ENCODE measurements at regions of chr13 and their contacts with region 1.

Region 1: GRCh38 chr13:107117327-107118012 is 549.5 kb upstream of the ARGLU1 start:
- DNase-seq: no peak
- ATAC-seq: no peak
- H3K4me3 ChIP-seq: no peak overlapping the region
- H3K27ac ChIP-seq: no peak overlapping the region
- H3K4me1 ChIP-seq: no peaks in the 10 kb centered on the region
- H3K27me3 ChIP-seq: peaks cover 0 to 8% (median 0%) of the 10 kb centered on the region in 9 donors
- CTCF ChIP-seq: no peak
- POLR2A ChIP-seq: no peak

Region 2: GRCh38 chr13:106083620-106084350 is 1033.7 kb before region 1 on chr13:
- intact Hi-C with region 1: loop called in 4 of 10 experiments (anchors 5 to 10 kb)
- DNase-seq: peak in 2 of 5 donors; percentile 17 to 23
- ATAC-seq: peak in 3 of 4 donors; percentile 33 to 63 (median 52)
- H3K4me3 ChIP-seq: no peak overlapping the region
- H3K27ac ChIP-seq: no peak overlapping the region
- H3K4me1 ChIP-seq: peaks cover 0 to 3% (median 0%) of the 10 kb centered on the region in 12 donors
- H3K27me3 ChIP-seq: no peaks in the 10 kb centered on the region
- CTCF ChIP-seq: peak; percentile 27 to 74 (median 56)
- POLR2A ChIP-seq: no peak

Region 3: GRCh38 chr13:106942558-106942957 is 174.9 kb before region 1 on chr13:
- intact Hi-C with region 1: loop called in 1 of 10 experiments (anchors 10 kb)
- DNase-seq: no peak
- ATAC-seq: no peak
- H3K4me3 ChIP-seq: no peak overlapping the region
- H3K27ac ChIP-seq: no peak overlapping the region
- H3K4me1 ChIP-seq: no peaks in the 10 kb centered on the region
- H3K27me3 ChIP-seq: no peaks in the 10 kb centered on the region
- CTCF ChIP-seq: no peak
- POLR2A ChIP-seq: no peak

Region 4: DNA sequence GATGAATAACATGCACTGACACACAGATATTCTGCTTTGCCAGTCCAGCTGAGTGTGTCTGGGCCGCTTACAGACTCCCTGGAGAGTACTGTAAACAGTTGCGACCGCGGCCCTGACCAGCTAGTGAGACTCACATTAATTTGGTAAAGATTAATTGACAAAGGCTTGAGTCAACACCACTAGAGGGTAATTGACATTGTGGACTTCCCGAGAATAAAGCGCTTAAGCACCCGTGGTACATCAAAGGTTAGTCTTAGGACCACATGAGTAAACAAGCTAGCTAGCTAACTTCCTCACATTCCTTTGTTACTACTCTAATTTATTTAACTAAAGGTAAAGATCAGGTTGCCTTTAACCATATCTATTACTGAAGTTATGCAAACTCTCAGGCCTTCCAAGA is 74.8 kb after region 1 on chr13:
- intact Hi-C with region 1: no loop called
- DNase-seq: no peak
- ATAC-seq: no peak
- H3K4me3 ChIP-seq: no peak overlapping the region
- H3K27ac ChIP-seq: no peak overlapping the region
- H3K4me1 ChIP-seq: no peaks in the 10 kb centered on the region
- H3K27me3 ChIP-seq: no peaks in the 10 kb centered on the region
- CTCF ChIP-seq: no peak
- POLR2A ChIP-seq: no peak

Measured in heart left ventricle (tissue), 16 donors.